Activated CD4-positive, alpha-beta T cell treated with anti-CD3 and anti-CD28 coated beads for 36 hours (primary cell): ENCODE measurements at regions of chr22 and their contacts with region 1.

Region 1: DNA sequence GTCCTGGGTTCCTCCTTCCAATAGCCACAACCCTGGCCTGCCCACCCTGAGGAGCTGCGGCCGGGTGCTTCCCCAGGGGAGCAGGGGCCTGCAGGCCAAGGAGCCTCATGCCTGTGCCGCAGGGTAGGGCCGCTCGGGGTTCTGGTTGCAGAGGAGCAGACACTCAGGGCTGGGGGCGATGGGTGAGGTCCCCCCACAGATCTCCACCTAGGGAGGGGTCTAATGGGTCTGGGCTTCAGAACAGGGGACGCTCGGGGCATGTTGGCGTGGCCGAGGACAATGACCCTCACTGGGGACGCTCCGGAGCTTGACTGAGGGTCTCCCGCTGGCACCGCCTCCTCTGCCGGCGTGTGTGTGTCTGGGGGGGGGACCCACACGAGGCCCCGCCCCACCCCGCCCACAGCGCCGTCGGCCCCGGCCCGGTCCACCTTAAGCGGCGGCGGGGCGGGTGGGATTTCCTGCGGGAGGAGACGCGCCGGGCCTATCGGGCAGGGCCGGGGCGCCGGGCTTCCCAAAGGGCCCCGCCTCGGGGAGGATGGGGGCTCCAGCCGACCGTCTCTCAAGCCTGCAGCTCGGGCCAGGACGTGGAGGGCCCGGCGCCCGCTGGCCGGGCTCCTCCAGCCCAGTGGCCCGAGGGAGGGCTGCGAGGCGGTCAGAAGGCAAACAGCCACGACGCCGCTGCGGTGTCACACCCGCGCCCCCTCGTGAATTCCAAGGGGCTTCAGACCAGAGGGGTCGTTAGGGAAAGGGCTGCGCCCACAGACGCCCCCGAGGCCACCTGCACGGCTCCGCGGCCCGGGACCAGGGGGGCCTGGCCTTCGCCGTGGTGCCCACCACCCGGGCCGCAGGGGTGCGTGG is 636 bp upstream of the ZDHHC8 start:
- DNase-seq: peak; percentile 81
- ATAC-seq: peak; percentile 52
- H3K4me3 Mint-ChIP-seq: peak overlapping the region; percentile 51
- H3K27ac Mint-ChIP-seq: no peak overlapping the region
- H3K4me1 Mint-ChIP-seq: peaks cover 33% of the 10 kb centered on the region
- H3K27me3 Mint-ChIP-seq: no peaks in the 10 kb centered on the region

Region 2: GRCh38 chr22:19962233-19962908 is 168.6 kb before region 1 on chr22:
- CTCF ChIA-PET with region 1: no interaction called
- POLR2A ChIA-PET with region 1: no interaction called
- intact Hi-C with region 1: loop called in 1 of 2 experiments (anchors 5 kb)
- DNase-seq: peak; percentile 87
- ATAC-seq: peak; percentile 82
- H3K4me3 Mint-ChIP-seq: no peak overlapping the region
- H3K27ac Mint-ChIP-seq: no peak overlapping the region
- H3K4me1 Mint-ChIP-seq: peaks cover 7% of the 10 kb centered on the region
- H3K27me3 Mint-ChIP-seq: no peaks in the 10 kb centered on the region

Region 3: GRCh38 chr22:19970479-19971275 is 160.3 kb before region 1 on chr22:
- CTCF ChIA-PET with region 1: no interaction called
- POLR2A ChIA-PET with region 1: no interaction called
- intact Hi-C with region 1: loop called (anchors 1 to 2 kb)
- DNase-seq: peak; percentile 86
- ATAC-seq: peak; percentile 86
- H3K4me3 Mint-ChIP-seq: no peak overlapping the region
- H3K27ac Mint-ChIP-seq: no peak overlapping the region
- H3K4me1 Mint-ChIP-seq: peaks cover 11% of the 10 kb centered on the region
- H3K27me3 Mint-ChIP-seq: no peaks in the 10 kb centered on the region

Region 4: GRCh38 chr22:19986410-19987341 is 144.3 kb before region 1 on chr22:
- CTCF ChIA-PET with region 1: no interaction called
- POLR2A ChIA-PET with region 1: no interaction called
- intact Hi-C with region 1: loop called in 1 of 2 experiments (anchors 1 kb)
- DNase-seq: peak; percentile 84
- ATAC-seq: peak; percentile 88
- H3K4me3 Mint-ChIP-seq: no peak overlapping the region
- H3K27ac Mint-ChIP-seq: no peak overlapping the region
- H3K4me1 Mint-ChIP-seq: no peaks in the 10 kb centered on the region
- H3K27me3 Mint-ChIP-seq: no peaks in the 10 kb centered on the region

Region 5: GRCh38 chr22:20079745-20080444 is 51.1 kb before region 1 on chr22 and contains the start of gene DGCR8:
- CTCF ChIA-PET with region 1: no interaction called
- POLR2A ChIA-PET with region 1: no interaction called
- intact Hi-C with region 1: loop called in 1 of 2 experiments (anchors 1 kb)
- DNase-seq: peak; percentile 78
- ATAC-seq: peak; percentile 92
- H3K4me3 Mint-ChIP-seq: peak within 1 kb of the TSS; percentile 88
- H3K27ac Mint-ChIP-seq: peak within 1 kb of the TSS; percentile 80
- H3K4me1 Mint-ChIP-seq: peaks cover 36% of the 10 kb centered on the region
- H3K27me3 Mint-ChIP-seq: no peaks in the 10 kb centered on the region
- total RNA-seq, gene DGCR8: 31.8 to 32.3 TPM

Region 6: GRCh38 chr22:20141186-20142077 is 10.5 kb after region 1 on chr22:
- CTCF ChIA-PET with region 1: no interaction called
- POLR2A ChIA-PET with region 1: no interaction called
- intact Hi-C with region 1: no loop called
- DNase-seq: no peak
- ATAC-seq: no peak
- H3K4me3 Mint-ChIP-seq: no peak overlapping the region
- H3K27ac Mint-ChIP-seq: no peak overlapping the region
- H3K4me1 Mint-ChIP-seq: peaks cover 8% of the 10 kb centered on the region
- H3K27me3 Mint-ChIP-seq: no peaks in the 10 kb centered on the region

Region 7: DNA sequence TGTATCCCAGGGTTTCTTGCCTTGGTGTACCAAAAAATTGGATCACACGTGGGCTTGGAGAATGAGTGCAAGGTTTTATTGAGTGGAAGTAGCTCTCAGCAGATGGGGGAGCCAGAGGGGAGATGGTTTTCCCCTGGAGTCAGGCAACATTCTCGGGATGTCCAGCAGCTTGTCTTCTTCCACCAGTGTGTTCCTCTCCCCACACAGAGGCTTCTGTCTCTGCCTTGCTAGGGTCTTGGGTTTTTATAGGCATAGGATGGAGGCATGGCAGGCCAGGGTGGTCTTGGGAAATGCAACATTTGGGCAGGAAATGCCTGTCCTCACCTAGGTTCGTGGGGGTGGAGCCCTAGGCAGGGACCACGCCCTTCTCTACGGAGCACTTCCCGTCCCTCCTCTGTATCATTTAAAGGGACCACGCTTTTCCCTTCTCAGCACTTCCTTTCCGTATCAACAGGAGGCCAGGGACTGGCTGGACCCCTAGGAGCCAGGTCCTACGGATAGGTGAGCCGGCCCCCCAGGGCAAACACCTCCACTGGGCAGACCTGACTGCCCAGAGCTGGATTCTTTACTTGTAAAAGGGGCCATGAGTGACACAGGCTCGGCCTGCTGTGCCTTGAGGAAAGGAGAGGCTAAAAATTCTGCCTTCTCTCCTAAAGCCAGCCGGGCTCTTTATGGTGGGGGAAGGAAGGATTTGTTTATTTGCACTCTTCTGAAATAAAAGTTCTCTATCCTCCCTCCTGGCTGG is 75.2 kb after region 1 on chr22:
- CTCF ChIA-PET with region 1: no interaction called
- POLR2A ChIA-PET with region 1: no interaction called
- intact Hi-C with region 1: loop called in 1 of 2 experiments (anchors 1 kb)
- DNase-seq: peak; percentile 80
- ATAC-seq: peak; percentile 97
- H3K4me3 Mint-ChIP-seq: peak overlapping the region; percentile 82
- H3K27ac Mint-ChIP-seq: peak overlapping the region; percentile 89
- H3K4me1 Mint-ChIP-seq: peaks cover 26% of the 10 kb centered on the region
- H3K27me3 Mint-ChIP-seq: no peaks in the 10 kb centered on the region